Naive thymus-derived CD4-positive, alpha-beta T cell (primary cell): ENCODE measurements at regions of chr13 and their contacts with region 1.

Region 1: GRCh38 chr13:26221721-26222519 is at the start of gene RNF6:
- DNase-seq: peak; percentile 83 to 92 (median 89)
- ATAC-seq: peak; percentile 95
- H3K4me3 ChIP-seq: peak within 1 kb of the TSS; percentile 96
- H3K4me3 Mint-ChIP-seq: peak within 1 kb of the TSS; percentile 95 to 100 (median 100)
- H3K27ac ChIP-seq: peak within 1 kb of the TSS; percentile 97
- H3K27ac Mint-ChIP-seq: peak within 1 kb of the TSS; percentile 93 to 100 (median 100)
- H3K4me1 ChIP-seq: peaks cover 16 to 17% of the 10 kb centered on the region in 2 donors
- H3K4me1 Mint-ChIP-seq: peaks cover 25 to 54% (median 49%) of the 10 kb centered on the region in 7 donors
- H3K27me3 ChIP-seq: no peaks in the 10 kb centered on the region
- H3K27me3 Mint-ChIP-seq: peaks cover 0 to 3% (median 0%) of the 10 kb centered on the region in 5 donors
- total RNA-seq, gene RNF6: 31.0 to 45.6 (median 44.6) TPM

Region 2: GRCh38 chr13:25301347-25302047 is 920.4 kb before region 1 on chr13 and contains the start of gene NUP58:
- CTCF ChIA-PET with region 1: no interaction called
- POLR2A ChIA-PET with region 1: no interaction called
- intact Hi-C with region 1: loop called in 1 of 2 experiments (anchors 5 kb)
- DNase-seq: peak; percentile 83 to 94 (median 92)
- ATAC-seq: peak; percentile 99
- H3K4me3 ChIP-seq: peak within 1 kb of the TSS; percentile 64
- H3K4me3 Mint-ChIP-seq: peak within 1 kb of the TSS; percentile 86 to 95 (median 92)
- H3K27ac ChIP-seq: peak within 1 kb of the TSS; percentile 93
- H3K27ac Mint-ChIP-seq: peak within 1 kb of the TSS; percentile 87 to 97 (median 93)
- H3K4me1 ChIP-seq: peaks cover 13 to 22% of the 10 kb centered on the region in 2 donors
- H3K4me1 Mint-ChIP-seq: peaks cover 21 to 51% (median 47%) of the 10 kb centered on the region in 7 donors
- H3K27me3 ChIP-seq: peaks cover 0 to 5% of the 10 kb centered on the region in 2 donors
- H3K27me3 Mint-ChIP-seq: peaks cover 7 to 19% (median 10%) of the 10 kb centered on the region in 5 donors
- total RNA-seq, gene NUP58: 41.1 to 89.1 (median 57.0) TPM

Region 3: DNA sequence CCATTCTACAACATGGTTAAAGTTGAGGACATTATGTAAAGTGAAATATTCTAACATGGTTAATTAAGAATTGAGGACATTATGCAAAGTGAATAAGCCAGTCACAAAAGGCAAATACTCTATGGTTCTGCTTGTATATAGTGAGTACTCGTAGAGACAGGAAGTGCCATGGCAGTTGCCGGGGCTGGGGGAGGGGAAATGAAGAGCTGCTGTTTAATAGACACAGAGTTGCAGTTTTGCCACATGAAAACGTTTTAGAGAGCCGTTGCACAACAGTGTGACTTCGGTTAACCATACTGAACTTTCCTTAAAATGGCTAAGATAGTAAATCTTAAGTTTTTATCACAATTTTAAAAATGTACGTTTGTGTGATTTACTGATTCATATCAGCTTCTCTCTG is 347.0 kb before region 1 on chr13:
- CTCF ChIA-PET with region 1: no interaction called
- POLR2A ChIA-PET with region 1: no interaction called
- intact Hi-C with region 1: loop called in 1 of 2 experiments (anchors 10 kb)
- DNase-seq: peak in 8 of 9 donors; percentile 24 to 84 (median 76)
- ATAC-seq: peak; percentile 90
- H3K4me3 ChIP-seq: peak overlapping the region; percentile 12
- H3K4me3 Mint-ChIP-seq: peak overlapping the region in 9 of 10 donors; percentile 14 to 71 (median 66)
- H3K27ac ChIP-seq: peak overlapping the region; percentile 55
- H3K27ac Mint-ChIP-seq: peak overlapping the region; percentile 57 to 94 (median 87)
- H3K4me1 ChIP-seq: peaks cover 15 to 44% of the 10 kb centered on the region in 2 donors
- H3K4me1 Mint-ChIP-seq: peaks cover 36 to 95% (median 79%) of the 10 kb centered on the region in 7 donors
- H3K27me3 ChIP-seq: no peaks in the 10 kb centered on the region
- H3K27me3 Mint-ChIP-seq: no peaks in the 10 kb centered on the region

Region 4: GRCh38 chr13:25980255-25980654 is 241.7 kb before region 1 on chr13:
- CTCF ChIA-PET with region 1: no interaction called
- POLR2A ChIA-PET with region 1: no interaction called
- intact Hi-C with region 1: no loop called
- DNase-seq: no peak
- ATAC-seq: no peak
- H3K4me3 ChIP-seq: no peak overlapping the region
- H3K4me3 Mint-ChIP-seq: no peak overlapping the region
- H3K27ac ChIP-seq: no peak overlapping the region
- H3K27ac Mint-ChIP-seq: peak overlapping the region in 2 of 9 donors; percentile 18 to 24
- H3K4me1 ChIP-seq: peaks cover 0 to 9% of the 10 kb centered on the region in 2 donors
- H3K4me1 Mint-ChIP-seq: peaks cover 15 to 38% (median 24%) of the 10 kb centered on the region in 7 donors
- H3K27me3 ChIP-seq: no peaks in the 10 kb centered on the region
- H3K27me3 Mint-ChIP-seq: peaks cover 0 to 7% (median 0%) of the 10 kb centered on the region in 5 donors

Region 5: DNA sequence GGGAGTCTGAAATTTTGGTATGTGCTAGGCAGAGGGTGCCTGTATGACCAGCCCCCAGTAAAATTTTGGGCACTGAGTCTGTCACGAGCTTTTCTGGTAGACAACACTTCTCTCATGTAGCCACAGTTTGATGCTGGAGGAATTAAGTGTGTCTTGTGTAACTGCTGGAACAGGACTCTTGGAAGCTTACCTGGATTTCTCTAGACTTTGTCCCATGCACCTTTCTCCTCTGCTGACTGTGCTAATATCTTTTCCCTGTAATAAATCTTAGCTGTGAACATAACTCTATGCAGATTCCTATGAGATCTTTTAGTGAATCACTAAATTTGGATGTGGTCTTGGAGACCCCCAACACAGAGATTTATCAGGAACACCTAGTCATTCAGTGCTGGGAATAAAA is 13.6 kb before region 1 on chr13:
- CTCF ChIA-PET with region 1: no interaction called
- POLR2A ChIA-PET with region 1: interaction called, 3 read pairs
- intact Hi-C with region 1: loop called in 1 of 2 experiments (anchors 1 kb)
- DNase-seq: no peak
- ATAC-seq: no peak
- H3K4me3 ChIP-seq: no peak overlapping the region
- H3K4me3 Mint-ChIP-seq: no peak overlapping the region
- H3K27ac ChIP-seq: no peak overlapping the region
- H3K27ac Mint-ChIP-seq: peak overlapping the region in 1 of 9 donors; percentile 56
- H3K4me1 ChIP-seq: no peaks in the 10 kb centered on the region
- H3K4me1 Mint-ChIP-seq: peaks cover 0 to 21% (median 6%) of the 10 kb centered on the region in 7 donors
- H3K27me3 ChIP-seq: no peaks in the 10 kb centered on the region
- H3K27me3 Mint-ChIP-seq: no peaks in the 10 kb centered on the region

Region 6: DNA sequence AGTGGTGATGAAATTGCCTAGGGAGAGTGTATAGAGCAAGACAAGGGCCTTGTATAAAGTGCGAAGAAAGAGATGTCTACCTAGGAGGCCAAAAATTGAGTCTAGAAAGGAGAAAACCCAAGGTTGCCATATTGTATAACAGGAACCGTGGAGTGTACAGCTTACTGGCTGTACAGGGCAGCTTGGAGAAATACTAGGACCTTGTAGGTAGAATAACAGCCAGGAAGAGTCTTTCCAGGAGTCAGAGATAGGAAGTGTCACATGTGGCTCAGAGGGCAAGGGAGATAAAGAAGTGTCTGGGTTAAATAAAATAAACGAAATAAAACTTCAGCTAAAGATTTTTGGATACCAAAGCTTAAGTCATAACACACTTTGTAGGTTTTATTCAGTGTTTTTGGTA is 44.4 kb after region 1 on chr13:
- CTCF ChIA-PET with region 1: no interaction called
- POLR2A ChIA-PET with region 1: no interaction called
- intact Hi-C with region 1: no loop called
- DNase-seq: no peak
- ATAC-seq: no peak
- H3K4me3 ChIP-seq: no peak overlapping the region
- H3K4me3 Mint-ChIP-seq: peak overlapping the region in 2 of 10 donors; percentile 13 to 14
- H3K27ac ChIP-seq: no peak overlapping the region
- H3K27ac Mint-ChIP-seq: no peak overlapping the region
- H3K4me1 ChIP-seq: no peaks in the 10 kb centered on the region
- H3K4me1 Mint-ChIP-seq: peaks cover 0 to 75% (median 57%) of the 10 kb centered on the region in 7 donors
- H3K27me3 ChIP-seq: no peaks in the 10 kb centered on the region
- H3K27me3 Mint-ChIP-seq: no peaks in the 10 kb centered on the region

Region 7: DNA sequence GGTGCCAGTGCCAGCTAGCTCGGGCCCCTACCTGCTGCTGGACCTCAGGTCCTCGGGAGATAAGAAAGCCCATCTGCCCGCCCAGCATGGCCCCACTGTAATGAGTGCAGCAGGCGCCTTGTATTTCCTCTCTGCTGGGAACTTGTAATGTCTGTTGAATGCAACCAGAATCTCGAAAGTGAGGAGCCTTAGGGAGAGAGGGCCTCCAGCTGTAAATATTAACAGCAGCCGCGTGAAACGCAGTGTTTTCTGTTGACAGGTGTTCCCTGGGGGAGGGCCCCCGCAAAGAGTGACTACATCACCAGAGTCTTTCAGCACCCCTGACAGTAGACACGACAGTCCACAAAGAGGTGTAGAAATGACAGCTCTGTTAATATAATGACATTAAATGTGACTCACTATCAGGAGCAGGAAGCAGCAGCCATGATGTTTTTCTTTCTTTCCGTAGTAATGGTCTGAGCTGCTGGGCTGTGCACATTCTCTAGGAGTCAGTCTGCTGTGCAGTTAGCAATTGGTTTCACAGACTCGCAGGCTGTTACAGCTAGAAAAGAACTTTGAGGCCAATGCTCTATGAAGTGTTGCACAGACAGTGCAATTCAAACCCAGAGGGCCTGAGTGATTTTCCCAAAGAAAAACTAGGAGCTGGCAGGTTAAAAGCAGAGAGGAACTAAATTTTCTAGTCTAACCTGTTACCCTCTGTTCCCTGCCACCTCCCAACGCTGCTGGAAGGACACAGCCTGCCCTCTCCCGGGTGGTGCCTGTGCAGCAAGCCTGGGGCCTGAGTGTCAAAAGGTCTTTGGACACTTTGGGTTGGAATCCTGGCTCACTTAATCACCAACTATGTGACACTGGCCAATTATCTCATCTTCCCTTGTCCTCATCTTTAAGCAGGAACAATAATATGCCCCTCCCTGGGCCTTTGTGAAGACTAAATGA is 277.0 kb after region 1 on chr13:
- CTCF ChIA-PET with region 1: no interaction called
- POLR2A ChIA-PET with region 1: no interaction called
- intact Hi-C with region 1: loop called in 1 of 2 experiments (anchors 1 kb)
- DNase-seq: no peak
- ATAC-seq: no peak
- H3K4me3 ChIP-seq: no peak overlapping the region
- H3K4me3 Mint-ChIP-seq: no peak overlapping the region
- H3K27ac ChIP-seq: no peak overlapping the region
- H3K27ac Mint-ChIP-seq: no peak overlapping the region
- H3K4me1 ChIP-seq: no peaks in the 10 kb centered on the region
- H3K4me1 Mint-ChIP-seq: peaks cover 4 to 15% (median 5%) of the 10 kb centered on the region in 7 donors
- H3K27me3 ChIP-seq: no peaks in the 10 kb centered on the region
- H3K27me3 Mint-ChIP-seq: peaks cover 0 to 9% (median 4%) of the 10 kb centered on the region in 5 donors

Region 8: DNA sequence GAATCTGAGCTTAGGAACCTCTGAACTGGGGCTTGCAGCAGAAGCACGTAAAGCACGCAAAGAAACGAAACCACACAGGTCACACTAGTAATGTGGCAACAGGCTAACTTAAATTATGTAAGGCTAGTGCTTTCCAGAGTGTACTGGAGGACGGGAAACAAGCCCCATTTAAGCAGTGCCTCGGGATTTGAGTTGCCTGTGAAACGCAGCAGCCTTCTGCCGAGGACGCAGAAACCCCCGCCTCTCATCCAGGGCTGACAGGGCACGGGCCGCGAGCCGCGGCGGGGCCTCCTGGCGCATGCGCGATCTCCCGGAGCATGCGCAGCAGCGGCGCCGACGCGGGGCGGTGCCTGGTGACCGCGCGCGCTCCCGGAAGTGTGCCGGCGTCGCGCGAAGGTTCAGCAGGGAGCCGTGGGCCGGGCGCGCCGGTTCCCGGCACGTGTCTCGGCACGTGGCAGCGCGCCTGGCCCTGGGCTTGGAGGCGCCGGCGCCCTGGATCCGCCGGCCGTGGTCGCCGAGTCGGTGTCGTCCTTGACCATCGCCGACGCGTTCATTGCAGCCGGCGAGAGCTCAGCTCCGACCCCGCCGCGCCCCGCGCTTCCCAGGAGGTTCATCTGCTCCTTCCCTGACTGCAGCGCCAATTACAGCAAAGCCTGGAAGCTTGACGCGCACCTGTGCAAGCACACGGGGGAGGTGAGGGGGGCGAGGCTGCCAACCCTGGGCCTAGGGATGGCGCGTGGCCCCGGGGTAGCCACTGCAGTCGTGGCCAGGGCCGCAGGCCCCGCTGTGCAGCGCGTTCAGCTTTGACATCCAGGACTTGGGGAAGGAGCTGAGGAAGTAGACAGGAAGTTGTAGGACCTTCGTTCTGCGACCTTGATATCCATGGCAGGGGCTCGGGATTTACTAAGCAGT is 1202.6 kb after region 1 on chr13 and contains the start of gene GTF3A:
- CTCF ChIA-PET with region 1: no interaction called
- POLR2A ChIA-PET with region 1: no interaction called
- intact Hi-C with region 1: loop called in 1 of 2 experiments (anchors 10 kb)
- DNase-seq: peak; percentile 83 to 97 (median 93)
- ATAC-seq: peak; percentile 77
- H3K4me3 ChIP-seq: peak within 1 kb of the TSS; percentile 71
- H3K4me3 Mint-ChIP-seq: peak within 1 kb of the TSS; percentile 81 to 96 (median 92)
- H3K27ac ChIP-seq: peak within 1 kb of the TSS; percentile 86
- H3K27ac Mint-ChIP-seq: peak within 1 kb of the TSS; percentile 88 to 98 (median 95)
- H3K4me1 ChIP-seq: peaks cover 24 to 45% of the 10 kb centered on the region in 2 donors
- H3K4me1 Mint-ChIP-seq: peaks cover 27 to 47% (median 42%) of the 10 kb centered on the region in 7 donors
- H3K27me3 ChIP-seq: no peaks in the 10 kb centered on the region
- H3K27me3 Mint-ChIP-seq: no peaks in the 10 kb centered on the region
- total RNA-seq, gene GTF3A: 123 to 254 (median 206) TPM